GM18951 (cell line): ENCODE measurements at regions of chr6 and their contacts with region 1.

Region 1: DNA sequence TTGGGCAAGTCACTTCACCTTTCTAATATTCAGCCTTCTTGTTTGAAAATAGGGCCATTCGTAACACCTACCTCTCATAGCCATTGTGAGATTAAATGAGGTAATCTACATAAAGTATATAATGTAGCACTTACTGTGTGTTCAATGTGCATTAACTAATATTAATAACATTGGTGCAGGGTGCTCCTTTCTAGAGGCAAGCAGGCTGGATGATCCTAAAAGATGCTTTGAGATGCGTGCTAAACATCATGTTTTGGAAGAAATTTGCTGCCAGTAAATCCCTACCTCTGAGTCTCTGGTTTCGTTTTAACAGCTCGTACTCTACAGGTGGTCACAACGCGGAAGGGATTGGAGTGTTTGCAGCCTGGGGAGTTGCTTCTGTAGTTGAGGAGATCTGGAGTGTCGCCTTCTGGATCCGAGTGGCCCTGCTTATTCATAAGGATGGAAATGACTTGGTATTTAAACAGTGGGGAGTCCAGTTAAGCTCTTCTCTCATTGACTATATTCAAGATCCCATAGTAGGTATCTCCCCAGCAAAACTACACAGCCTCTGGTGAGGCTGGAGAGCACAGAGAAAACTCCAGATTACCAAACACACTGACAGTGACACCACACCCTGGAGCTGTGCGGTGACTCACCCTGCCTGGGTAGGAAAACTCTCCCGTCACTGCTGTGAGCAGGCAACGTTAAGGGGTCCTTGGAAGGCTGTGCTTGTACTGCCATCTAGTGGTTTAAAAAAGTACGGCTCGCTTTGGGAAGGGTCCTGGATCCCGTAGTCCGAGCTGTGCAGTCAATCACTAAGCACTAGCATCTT is 107.9 kb downstream of the MAP3K7 start:
- POLR2A ChIP-seq: no peak

Region 2: GRCh38 chr6:89934685-89935366 is 544.2 kb before region 1 on chr6:
- in situ Hi-C with region 1: loop called (anchors 5 kb)
- POLR2A ChIP-seq: no peak

Region 3: DNA sequence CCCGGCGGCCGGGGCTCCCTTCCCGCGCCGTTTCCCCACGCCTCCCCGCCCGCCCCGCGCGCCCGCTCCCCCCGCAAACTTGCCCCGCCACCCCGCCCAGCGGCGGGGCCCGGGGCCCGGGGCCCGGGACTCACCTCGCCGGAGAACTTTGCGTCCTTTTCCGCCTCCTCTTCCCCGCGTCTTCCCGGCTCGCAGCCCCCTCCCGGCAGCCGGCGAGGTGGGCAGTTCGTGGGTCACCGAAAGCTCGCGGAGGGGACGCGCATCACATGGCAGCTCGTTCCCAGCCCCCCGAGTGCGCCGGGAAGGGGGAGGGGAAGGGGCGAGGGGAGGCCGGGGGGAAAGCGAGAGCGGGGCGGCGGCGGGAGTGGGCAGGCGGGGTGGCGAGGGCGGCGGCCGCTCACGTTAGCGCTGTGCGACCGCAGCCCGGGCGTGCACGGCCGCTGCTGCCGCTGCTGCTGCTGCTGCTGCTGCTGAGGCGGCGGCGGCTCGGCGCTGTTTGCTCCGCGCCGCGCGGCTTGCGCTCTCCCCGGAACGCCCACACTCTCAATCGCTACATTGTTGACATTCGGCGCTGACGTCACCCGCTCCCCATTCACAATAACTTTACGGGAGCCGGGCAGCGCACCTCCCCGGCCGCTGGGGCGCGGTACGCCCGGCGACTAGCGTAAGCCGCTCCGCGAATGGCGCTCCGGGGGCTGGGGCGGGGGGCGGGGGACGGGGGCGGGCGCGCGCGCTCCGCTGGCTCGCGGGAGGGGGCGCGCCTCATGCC is 182.5 kb before region 1 on chr6 and contains the start of gene BACH2:
- in situ Hi-C with region 1: loop called (anchors 10 kb)
- POLR2A ChIP-seq: no peak